Naive thymus-derived CD4-positive, alpha-beta T cell (primary cell): ENCODE measurements at regions of chr15 and their contacts with region 1.

Region 1: DNA sequence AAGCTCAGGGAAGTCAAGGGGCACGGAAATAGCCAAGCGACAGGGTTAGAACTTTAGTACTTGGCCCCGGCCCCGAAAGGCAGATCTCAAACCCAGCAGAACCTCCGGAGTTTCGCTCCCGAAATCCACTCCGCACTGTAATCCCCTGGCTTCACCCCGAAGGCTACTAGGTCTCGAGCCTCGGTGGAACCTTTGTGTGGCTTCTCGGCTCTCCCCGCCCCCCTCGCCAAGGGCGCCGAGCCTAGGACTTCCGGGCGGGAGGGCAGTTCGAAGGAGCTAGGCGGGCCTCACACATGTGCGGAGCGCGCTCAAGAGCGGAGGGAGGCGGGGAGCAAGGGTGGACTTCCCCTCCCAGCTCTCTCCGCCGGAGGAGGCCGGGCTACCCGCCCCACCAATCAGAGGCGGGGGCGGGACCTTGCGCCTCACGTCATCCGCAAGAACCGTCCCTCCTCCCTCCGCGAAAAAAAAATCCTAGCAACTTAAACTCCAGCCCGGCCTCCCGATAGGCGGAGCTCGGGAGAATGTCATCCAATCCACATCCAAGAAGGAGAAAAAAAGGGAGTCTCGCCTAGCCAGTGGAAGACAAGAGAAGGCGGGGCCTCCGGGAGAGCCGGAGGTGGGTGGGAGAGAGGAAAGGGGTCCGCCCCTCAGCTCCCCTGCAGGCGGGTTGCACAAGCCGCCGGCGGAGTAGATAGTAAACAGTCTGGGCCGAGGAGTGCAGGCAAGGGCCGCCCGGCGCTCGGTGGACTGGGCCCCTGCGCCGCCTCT is 2.4 kb upstream of the SIN3A start:
- DNase-seq: peak; percentile 86 to 100 (median 99)
- ATAC-seq: peak; percentile 54
- H3K4me3 ChIP-seq: peak overlapping the region; percentile 89
- H3K4me3 Mint-ChIP-seq: peak overlapping the region; percentile 91 to 99 (median 96)
- H3K27ac ChIP-seq: peak overlapping the region; percentile 97
- H3K27ac Mint-ChIP-seq: peak overlapping the region; percentile 94 to 99 (median 98)
- H3K4me1 ChIP-seq: peaks cover 17 to 29% of the 10 kb centered on the region in 2 donors
- H3K4me1 Mint-ChIP-seq: peaks cover 19 to 40% (median 30%) of the 10 kb centered on the region in 7 donors
- H3K27me3 ChIP-seq: no peaks in the 10 kb centered on the region
- H3K27me3 Mint-ChIP-seq: peaks cover 0 to 2% (median 0%) of the 10 kb centered on the region in 5 donors

Region 2: GRCh38 chr15:73633111-73633990 is 1820.5 kb before region 1 on chr15 and contains the start of gene NPTN:
- CTCF ChIA-PET with region 1: no interaction called
- POLR2A ChIA-PET with region 1: no interaction called
- intact Hi-C with region 1: loop called in 1 of 2 experiments (anchors 5 kb)
- DNase-seq: peak; percentile 96 to 99 (median 97)
- ATAC-seq: peak; percentile 95
- H3K4me3 ChIP-seq: peak within 1 kb of the TSS; percentile 73
- H3K4me3 Mint-ChIP-seq: peak within 1 kb of the TSS; percentile 79 to 97 (median 90)
- H3K27ac ChIP-seq: peak within 1 kb of the TSS; percentile 74
- H3K27ac Mint-ChIP-seq: peak within 1 kb of the TSS; percentile 71 to 96 (median 85)
- H3K4me1 ChIP-seq: peaks cover 16 to 26% of the 10 kb centered on the region in 2 donors
- H3K4me1 Mint-ChIP-seq: peaks cover 33 to 59% (median 49%) of the 10 kb centered on the region in 7 donors
- H3K27me3 ChIP-seq: no peaks in the 10 kb centered on the region
- H3K27me3 Mint-ChIP-seq: peaks cover 5 to 25% (median 8%) of the 10 kb centered on the region in 5 donors
- total RNA-seq, gene NPTN: 26.8 to 48.2 (median 42.6) TPM

Region 3: GRCh38 chr15:74615508-74616365 is 838.1 kb before region 1 on chr15 and contains the start of gene CLK3:
- CTCF ChIA-PET with region 1: no interaction called
- POLR2A ChIA-PET with region 1: interaction called, 6 read pairs
- intact Hi-C with region 1: loop called (anchors 2 to 5 kb)
- DNase-seq: peak; percentile 92 to 98 (median 96)
- ATAC-seq: peak; percentile 83
- H3K4me3 ChIP-seq: peak within 1 kb of the TSS; percentile 79
- H3K4me3 Mint-ChIP-seq: peak within 1 kb of the TSS; percentile 91 to 96 (median 93)
- H3K27ac ChIP-seq: peak within 1 kb of the TSS; percentile 100
- H3K27ac Mint-ChIP-seq: peak within 1 kb of the TSS; percentile 92 to 98 (median 95)
- H3K4me1 ChIP-seq: peaks cover 23 to 30% of the 10 kb centered on the region in 2 donors
- H3K4me1 Mint-ChIP-seq: peaks cover 31 to 45% (median 43%) of the 10 kb centered on the region in 7 donors
- H3K27me3 ChIP-seq: no peaks in the 10 kb centered on the region
- H3K27me3 Mint-ChIP-seq: no peaks in the 10 kb centered on the region
- total RNA-seq, gene CLK3: 131 to 273 (median 177) TPM

Region 4: GRCh38 chr15:74937596-74938296 is 516.1 kb before region 1 on chr15 and contains the start of gene COX5A:
- CTCF ChIA-PET with region 1: no interaction called
- POLR2A ChIA-PET with region 1: interaction called, 4 read pairs
- intact Hi-C with region 1: loop called (anchors 5 to 10 kb)
- DNase-seq: peak; percentile 86 to 94 (median 92)
- ATAC-seq: peak; percentile 99
- H3K4me3 ChIP-seq: peak within 1 kb of the TSS; percentile 62
- H3K4me3 Mint-ChIP-seq: peak within 1 kb of the TSS; percentile 87 to 97 (median 94)
- H3K27ac ChIP-seq: peak within 1 kb of the TSS; percentile 85
- H3K27ac Mint-ChIP-seq: peak within 1 kb of the TSS; percentile 85 to 95 (median 91)
- H3K4me1 ChIP-seq: peaks cover 0 to 17% of the 10 kb centered on the region in 2 donors
- H3K4me1 Mint-ChIP-seq: peaks cover 16 to 38% (median 26%) of the 10 kb centered on the region in 7 donors
- H3K27me3 ChIP-seq: no peaks in the 10 kb centered on the region
- H3K27me3 Mint-ChIP-seq: peaks cover 0 to 3% (median 0%) of the 10 kb centered on the region in 5 donors
- total RNA-seq, gene COX5A: 44.4 to 210 (median 59.2) TPM

Region 5: DNA sequence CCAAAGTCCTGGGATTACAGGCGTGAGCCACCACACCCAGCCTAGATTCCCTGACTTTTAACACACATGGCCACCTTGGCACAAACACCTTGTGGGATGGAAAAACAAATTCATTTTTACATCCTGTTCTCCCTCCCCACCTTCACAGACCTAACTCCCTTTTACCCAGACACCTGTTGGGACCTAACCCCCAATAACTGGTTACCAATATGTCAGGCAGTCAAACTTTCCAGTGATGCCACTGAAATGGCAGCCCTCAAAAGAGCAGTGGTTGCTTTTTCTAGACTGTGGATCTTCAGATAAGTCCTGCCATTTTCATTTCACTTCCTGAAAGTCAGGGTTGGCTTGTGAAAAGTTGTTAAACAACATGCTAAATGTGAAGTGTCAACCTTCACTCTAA is 37.3 kb before region 1 on chr15:
- CTCF ChIA-PET with region 1: no interaction called
- POLR2A ChIA-PET with region 1: interaction called, 10 read pairs
- intact Hi-C with region 1: loop called in 1 of 2 experiments (anchors 5 kb)
- DNase-seq: no peak
- ATAC-seq: no peak
- H3K4me3 ChIP-seq: no peak overlapping the region
- H3K4me3 Mint-ChIP-seq: no peak overlapping the region
- H3K27ac ChIP-seq: no peak overlapping the region
- H3K27ac Mint-ChIP-seq: peak overlapping the region in 3 of 9 donors; percentile 18 to 78 (median 33)
- H3K4me1 ChIP-seq: no peaks in the 10 kb centered on the region
- H3K4me1 Mint-ChIP-seq: peaks cover 1 to 22% (median 16%) of the 10 kb centered on the region in 7 donors
- H3K27me3 ChIP-seq: no peaks in the 10 kb centered on the region
- H3K27me3 Mint-ChIP-seq: no peaks in the 10 kb centered on the region

Region 6: DNA sequence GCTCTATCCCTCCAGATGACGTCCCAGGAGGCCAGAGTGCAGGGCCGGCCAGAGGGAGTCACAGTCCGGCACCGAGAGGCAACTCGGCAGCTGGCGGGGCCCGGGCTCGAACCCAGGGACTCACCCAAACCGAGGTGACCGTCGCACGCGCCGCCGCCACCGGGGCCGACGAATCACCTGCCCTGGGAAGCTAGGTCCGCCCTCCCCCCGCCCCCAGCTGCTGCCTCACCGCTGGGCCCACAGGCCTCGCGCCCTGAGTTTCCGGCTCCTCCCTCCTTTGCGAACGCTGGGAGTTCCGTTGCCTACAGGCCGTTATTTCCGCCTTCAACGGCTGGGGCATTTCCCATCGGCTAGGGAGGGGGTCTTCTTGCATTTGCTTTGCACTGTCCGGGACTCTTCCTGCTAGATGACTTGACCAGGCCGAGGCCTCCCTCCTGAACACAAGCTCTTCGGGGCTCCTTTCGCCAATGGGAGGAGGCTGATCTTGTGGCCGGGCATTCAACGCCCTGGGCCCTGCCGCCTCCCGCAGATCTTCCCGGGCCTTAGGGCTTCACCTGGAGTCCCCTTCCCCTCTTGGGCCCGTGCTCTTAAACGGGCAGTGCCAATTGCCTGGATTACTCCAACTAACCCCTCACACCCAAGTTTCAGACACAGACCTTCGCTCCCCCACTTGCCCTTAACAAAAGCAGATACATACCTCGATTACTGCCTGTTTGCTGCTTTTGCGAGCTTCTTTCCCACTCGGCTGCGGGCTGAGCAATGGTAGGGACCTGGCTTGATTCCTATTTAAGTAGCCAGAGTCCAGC is 171.9 kb after region 1 on chr15 and contains the start of gene SNUPN:
- CTCF ChIA-PET with region 1: interaction called, 7 read pairs
- POLR2A ChIA-PET with region 1: interaction called, 86 read pairs
- intact Hi-C with region 1: loop called (anchors 1 kb)
- DNase-seq: peak; percentile 75 to 92 (median 88)
- ATAC-seq: peak; percentile 97
- H3K4me3 ChIP-seq: peak within 1 kb of the TSS; percentile 100
- H3K4me3 Mint-ChIP-seq: peak within 1 kb of the TSS; percentile 85 to 99 (median 92)
- H3K27ac ChIP-seq: peak within 1 kb of the TSS; percentile 97
- H3K27ac Mint-ChIP-seq: peak within 1 kb of the TSS; percentile 92 to 99 (median 96)
- H3K4me1 ChIP-seq: peaks cover 11 to 16% of the 10 kb centered on the region in 2 donors
- H3K4me1 Mint-ChIP-seq: peaks cover 22 to 41% (median 35%) of the 10 kb centered on the region in 7 donors
- H3K27me3 ChIP-seq: no peaks in the 10 kb centered on the region
- H3K27me3 Mint-ChIP-seq: no peaks in the 10 kb centered on the region
- total RNA-seq, gene SNUPN: 16.5 to 33.2 (median 21.5) TPM

Region 7: GRCh38 chr15:75903331-75904239 is 449.7 kb after region 1 on chr15 and contains the start of gene FBXO22:
- CTCF ChIA-PET with region 1: no interaction called
- POLR2A ChIA-PET with region 1: no interaction called
- intact Hi-C with region 1: loop called in 1 of 2 experiments (anchors 10 kb)
- DNase-seq: peak; percentile 79 to 92 (median 85)
- ATAC-seq: peak; percentile 98
- H3K4me3 ChIP-seq: peak within 1 kb of the TSS; percentile 91
- H3K4me3 Mint-ChIP-seq: peak within 1 kb of the TSS; percentile 96 to 99 (median 98)
- H3K27ac ChIP-seq: peak within 1 kb of the TSS; percentile 79
- H3K27ac Mint-ChIP-seq: peak within 1 kb of the TSS; percentile 91 to 97 (median 94)
- H3K4me1 ChIP-seq: peaks cover 0 to 12% of the 10 kb centered on the region in 2 donors
- H3K4me1 Mint-ChIP-seq: peaks cover 15 to 70% (median 51%) of the 10 kb centered on the region in 7 donors
- H3K27me3 ChIP-seq: no peaks in the 10 kb centered on the region
- H3K27me3 Mint-ChIP-seq: no peaks in the 10 kb centered on the region
- total RNA-seq, gene FBXO22: 9.7 to 34.5 (median 25.5) TPM